ENCODE measurements at regions of chr5 and their contacts with region 1.

Region 1: GRCh38 chr5:178075840-178076548 is 37.3 kb upstream of the N4BP3 start:
- DNase-seq: peak; percentile 88
- H3K4me3 Mint-ChIP-seq: peak overlapping the region; percentile 29
- H3K27ac Mint-ChIP-seq: no peak overlapping the region
- H3K4me1 Mint-ChIP-seq: peaks cover 33% of the 10 kb centered on the region
- H3K27me3 Mint-ChIP-seq: peaks cover 73% of the 10 kb centered on the region
- CTCF ChIP-seq: peak; percentile 99

Region 2: GRCh38 chr5:178113199-178113787 is 37.3 kb after region 1 on chr5 and contains the start of gene N4BP3:
- CTCF ChIA-PET with region 1: interaction called, 13 read pairs
- intact Hi-C with region 1: loop called (anchors 5 kb)
- DNase-seq: peak; percentile 93
- H3K4me3 Mint-ChIP-seq: peak within 1 kb of the TSS; percentile 82
- H3K27ac Mint-ChIP-seq: peak within 1 kb of the TSS; percentile 51
- H3K4me1 Mint-ChIP-seq: peaks cover 19% of the 10 kb centered on the region
- H3K27me3 Mint-ChIP-seq: no peaks in the 10 kb centered on the region
- CTCF ChIP-seq: no peak
- total RNA-seq, gene N4BP3: 4.8 and 6.9 TPM in 2 replicates

Region 3: GRCh38 chr5:178123687-178124588 is 47.9 kb after region 1 on chr5:
- CTCF ChIA-PET with region 1: interaction called, 16 read pairs
- intact Hi-C with region 1: no loop called
- DNase-seq: peak; percentile 93
- H3K4me3 Mint-ChIP-seq: peak overlapping the region; percentile 31
- H3K27ac Mint-ChIP-seq: peak overlapping the region; percentile 56
- H3K4me1 Mint-ChIP-seq: peaks cover 22% of the 10 kb centered on the region
- H3K27me3 Mint-ChIP-seq: no peaks in the 10 kb centered on the region
- CTCF ChIP-seq: no peak

Region 4: GRCh38 chr5:178146020-178146820 is 70.2 kb after region 1 on chr5:
- CTCF ChIA-PET with region 1: interaction called, 112 read pairs
- intact Hi-C with region 1: loop called (anchors 1 kb)
- DNase-seq: peak; percentile 88
- H3K4me3 Mint-ChIP-seq: no peak overlapping the region
- H3K27ac Mint-ChIP-seq: peak overlapping the region; percentile 86
- H3K4me1 Mint-ChIP-seq: peaks cover 18% of the 10 kb centered on the region
- H3K27me3 Mint-ChIP-seq: no peaks in the 10 kb centered on the region
- CTCF ChIP-seq: peak; percentile 94

Region 5: GRCh38 chr5:178153573-178154343 is 77.8 kb after region 1 on chr5 and contains the start of gene NHP2:
- CTCF ChIA-PET with region 1: interaction called, 112 read pairs
- intact Hi-C with region 1: no loop called
- DNase-seq: peak; percentile 99
- H3K4me3 Mint-ChIP-seq: peak within 1 kb of the TSS; percentile 94
- H3K27ac Mint-ChIP-seq: peak within 1 kb of the TSS; percentile 96
- H3K4me1 Mint-ChIP-seq: peaks cover 22% of the 10 kb centered on the region
- H3K27me3 Mint-ChIP-seq: no peaks in the 10 kb centered on the region
- CTCF ChIP-seq: no peak
- total RNA-seq, gene NHP2: 182 and 193 TPM in 2 replicates

Region 6: DNA sequence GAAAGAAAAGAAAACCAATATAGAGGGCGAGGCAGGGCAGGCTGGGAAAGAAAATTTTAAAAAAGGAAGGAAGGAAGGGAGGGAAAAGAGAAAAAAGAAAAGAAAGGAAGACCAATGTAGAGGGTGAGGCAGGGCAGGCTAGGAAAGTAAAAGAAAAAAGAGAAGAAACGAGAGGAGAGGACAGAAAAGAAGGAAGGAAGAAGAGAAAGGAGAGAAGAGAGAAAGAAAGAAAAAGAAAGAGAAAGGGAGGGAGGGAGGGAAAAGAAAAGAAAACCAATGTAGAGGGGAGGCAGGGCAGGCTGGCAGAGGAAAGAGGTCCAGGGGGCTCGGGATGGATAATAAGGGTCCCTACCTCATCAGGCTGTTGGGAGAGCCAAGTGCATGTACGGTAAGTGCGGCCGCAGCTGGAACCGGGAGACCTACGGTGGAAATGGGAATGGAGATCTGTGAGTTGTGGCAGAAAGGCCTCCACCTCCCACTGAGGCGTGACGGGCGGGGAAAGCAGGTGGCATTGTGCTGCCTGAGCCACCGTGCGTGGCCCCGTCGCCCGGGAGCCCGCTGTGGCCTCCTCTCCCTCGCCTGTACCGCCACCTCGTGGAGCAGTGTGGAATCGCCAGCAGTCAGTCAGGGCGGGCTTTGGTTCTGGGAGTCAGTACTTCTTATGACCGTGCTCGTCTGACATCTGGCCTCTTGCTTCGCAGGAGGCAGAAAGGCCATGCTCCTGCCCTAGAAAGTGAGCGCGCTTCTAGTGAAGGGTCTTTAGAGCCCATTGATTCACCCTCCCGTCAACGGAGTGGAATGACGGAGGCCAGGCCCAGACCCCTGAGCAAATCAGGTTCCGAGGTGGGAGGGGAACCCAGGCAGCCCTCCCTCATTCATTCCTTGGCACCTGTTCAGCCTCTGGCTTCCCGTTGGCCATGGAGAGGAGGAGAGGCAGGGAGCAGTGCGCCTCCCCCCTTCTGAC is 88.1 kb after region 1 on chr5:
- CTCF ChIA-PET with region 1: interaction called, 12 read pairs
- intact Hi-C with region 1: loop called (anchors 1 kb)
- DNase-seq: peak; percentile 94
- H3K4me3 Mint-ChIP-seq: peak overlapping the region; percentile 8
- H3K27ac Mint-ChIP-seq: no peak overlapping the region
- H3K4me1 Mint-ChIP-seq: no peaks in the 10 kb centered on the region
- H3K27me3 Mint-ChIP-seq: peaks cover 32% of the 10 kb centered on the region
- CTCF ChIP-seq: peak; percentile 99

Measured in Calu3 (cell line).